Activated naive CD4-positive, alpha-beta T cell treated with anti-CD3 and anti-CD28 coated beads for 36 hours (primary cell): ENCODE measurements at regions of chr11 and their contacts with region 1.

Region 1: DNA sequence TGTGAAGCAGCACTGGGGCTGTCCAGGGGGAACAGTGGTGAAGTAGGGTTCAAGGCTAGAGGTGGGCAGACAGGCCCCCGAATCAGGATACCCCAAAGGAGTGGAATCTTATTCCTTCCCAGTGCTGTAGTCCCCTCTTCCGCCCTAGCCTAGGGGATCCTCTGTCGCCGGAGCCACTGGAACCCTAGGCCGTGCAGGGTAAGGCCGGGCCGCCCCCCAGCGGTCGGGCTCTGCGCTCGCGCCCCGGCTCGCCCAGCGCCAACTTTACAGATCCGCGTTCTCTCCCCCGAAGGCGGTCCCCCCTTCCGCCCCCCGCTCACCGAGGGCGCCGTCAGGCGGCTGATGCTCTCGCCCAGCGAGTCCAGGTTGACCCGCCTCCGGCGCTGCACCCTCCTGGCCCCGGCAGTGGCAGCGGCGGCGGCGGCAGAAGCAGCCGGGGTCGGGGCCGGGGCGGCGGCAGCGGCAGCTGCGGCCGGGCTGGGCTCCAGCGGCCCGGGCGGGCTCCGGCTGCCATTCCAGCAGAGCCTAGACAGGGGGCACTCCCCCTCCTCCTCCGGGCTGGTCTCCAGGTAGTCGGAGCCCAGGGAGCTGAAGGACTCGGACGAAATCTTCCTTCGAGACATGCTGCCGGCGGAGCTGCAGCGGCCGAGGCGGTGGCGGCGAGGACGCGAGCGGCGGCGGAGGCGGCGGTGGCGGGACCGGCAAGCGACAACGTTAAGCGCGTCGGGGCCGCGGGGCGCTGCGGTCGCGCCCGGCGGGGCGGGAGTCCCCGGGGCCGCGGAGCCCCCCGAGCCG is 646 bp downstream of the GUCY1A2 start:
- DNase-seq: peak; percentile 16
- H3K4me3 Mint-ChIP-seq: peak overlapping the region; percentile 24
- H3K27ac Mint-ChIP-seq: no peak overlapping the region
- H3K4me1 Mint-ChIP-seq: peaks cover 4% of the 10 kb centered on the region
- H3K27me3 Mint-ChIP-seq: peaks cover 47% of the 10 kb centered on the region

Region 2: DNA sequence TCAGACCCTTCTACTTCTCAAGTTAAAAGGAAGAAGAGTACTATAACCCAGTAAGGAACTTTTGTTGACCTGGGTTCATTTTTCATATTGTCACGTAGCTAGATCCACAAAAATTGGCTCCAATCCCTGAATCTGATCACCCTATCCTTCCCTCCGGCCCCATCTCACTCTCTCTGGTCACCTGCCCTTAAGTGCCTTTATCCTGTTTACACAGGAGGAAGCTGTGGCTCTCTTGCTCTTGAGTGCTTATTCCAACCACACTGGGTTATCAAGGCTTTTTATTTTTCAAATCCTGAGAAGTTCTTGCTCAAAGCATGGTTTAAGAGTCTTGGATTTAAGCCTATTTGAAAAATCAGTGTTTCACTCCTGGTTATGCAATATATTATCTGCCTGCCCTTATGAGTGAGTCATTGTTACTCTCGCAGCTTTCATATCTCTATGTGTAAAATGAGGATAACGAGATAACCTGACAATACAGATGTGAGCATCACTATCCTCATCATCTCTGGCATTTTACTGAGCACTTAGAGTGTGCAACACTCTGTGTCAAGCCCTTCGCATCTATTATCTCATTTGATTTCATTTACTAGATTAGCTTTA is 293.2 kb before region 1 on chr11:
- CTCF ChIA-PET with region 1: no interaction called
- intact Hi-C with region 1: loop called (anchors 5 kb)
- DNase-seq: no peak
- H3K4me3 Mint-ChIP-seq: no peak overlapping the region
- H3K27ac Mint-ChIP-seq: no peak overlapping the region
- H3K4me1 Mint-ChIP-seq: no peaks in the 10 kb centered on the region
- H3K27me3 Mint-ChIP-seq: no peaks in the 10 kb centered on the region

Region 3: GRCh38 chr11:107131756-107132155 is 114.1 kb after region 1 on chr11:
- CTCF ChIA-PET with region 1: no interaction called
- intact Hi-C with region 1: no loop called
- DNase-seq: no peak
- H3K4me3 Mint-ChIP-seq: no peak overlapping the region
- H3K27ac Mint-ChIP-seq: no peak overlapping the region
- H3K4me1 Mint-ChIP-seq: no peaks in the 10 kb centered on the region
- H3K27me3 Mint-ChIP-seq: no peaks in the 10 kb centered on the region

Region 4: GRCh38 chr11:107252429-107253161 is 235.0 kb after region 1 on chr11:
- CTCF ChIA-PET with region 1: no interaction called
- intact Hi-C with region 1: no loop called
- DNase-seq: no peak
- H3K4me3 Mint-ChIP-seq: no peak overlapping the region
- H3K27ac Mint-ChIP-seq: no peak overlapping the region
- H3K4me1 Mint-ChIP-seq: no peaks in the 10 kb centered on the region
- H3K27me3 Mint-ChIP-seq: peaks cover 5% of the 10 kb centered on the region